ENCODE measurements at regions of chr2 and their contacts with region 1.

Region 1: DNA sequence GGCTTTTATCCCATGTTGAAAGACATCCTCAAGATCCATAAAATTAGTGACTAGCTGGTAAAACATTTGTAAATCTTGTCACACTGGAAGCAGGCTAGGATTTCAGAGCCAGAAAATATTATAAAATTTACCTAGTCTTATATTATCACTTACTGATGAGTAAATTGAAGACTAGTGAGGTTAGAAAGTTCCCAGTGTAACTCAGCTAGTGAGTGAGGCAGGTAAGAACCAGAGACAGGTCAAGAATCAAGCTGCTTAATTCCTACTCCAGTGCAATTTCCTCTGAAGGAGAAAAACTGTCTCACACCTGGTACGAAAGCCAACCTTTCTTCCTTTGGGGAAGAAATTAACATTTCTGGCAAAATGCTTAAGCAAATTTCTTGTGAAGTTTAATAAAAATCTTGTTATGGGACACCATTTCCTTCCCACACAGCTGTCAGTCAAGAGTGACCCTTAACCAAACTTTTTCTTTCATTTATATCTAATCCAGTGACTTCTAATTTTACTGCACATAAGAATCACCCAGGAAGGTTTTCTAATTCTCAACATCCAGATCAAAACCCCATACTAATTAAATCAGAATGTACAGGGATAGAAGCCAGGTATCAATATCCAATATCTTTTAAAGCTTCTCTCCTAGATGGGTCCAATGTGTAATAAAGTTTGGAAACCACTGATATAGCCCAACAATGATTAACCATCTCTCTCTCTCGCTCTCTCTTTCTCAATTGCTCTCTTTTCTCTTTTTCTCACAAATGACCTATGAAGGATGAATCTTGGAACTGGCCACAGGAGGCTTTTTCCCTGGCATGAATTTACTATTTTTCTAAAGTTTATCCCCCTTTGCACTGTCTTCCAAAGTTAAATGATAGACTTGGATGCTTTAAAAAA is 264.3 kb upstream of the SLC39A10 start:
- DNase-seq: no peak
- ATAC-seq: no peak
- H3K4me3 ChIP-seq: no peak overlapping the region
- H3K4me1 ChIP-seq: no peaks in the 10 kb centered on the region
- CTCF ChIP-seq: no peak

Region 2: GRCh38 chr2:195212586-195212985 is 180.1 kb before region 1 on chr2:
- intact Hi-C with region 1: loop called in 1 of 2 experiments (anchors 5 kb)
- DNase-seq: no peak
- ATAC-seq: no peak
- H3K4me3 ChIP-seq: no peak overlapping the region
- H3K4me1 ChIP-seq: no peaks in the 10 kb centered on the region
- CTCF ChIP-seq: no peak

Region 3: DNA sequence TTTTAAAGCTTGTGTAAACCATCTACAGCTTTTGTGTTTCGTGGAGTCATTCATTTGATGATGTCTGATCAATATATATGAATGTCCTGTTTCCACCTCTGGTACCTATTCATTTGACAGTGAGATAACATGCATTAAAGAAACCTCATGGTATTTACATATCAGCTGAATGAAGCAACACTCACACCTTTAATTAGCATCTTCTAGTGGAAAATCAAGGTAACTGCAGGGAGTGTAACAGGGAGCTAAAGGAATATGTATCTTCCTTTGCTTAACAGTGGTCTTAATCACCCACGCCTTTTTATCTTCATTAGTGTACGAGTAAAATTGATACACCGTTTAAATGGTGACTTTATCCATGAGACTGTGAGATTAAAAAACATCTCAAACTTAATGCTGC is 280.0 kb after region 1 on chr2:
- intact Hi-C with region 1: no loop called
- DNase-seq: no peak
- ATAC-seq: peak; percentile 25
- H3K4me3 ChIP-seq: no peak overlapping the region
- H3K4me1 ChIP-seq: peaks cover 4% of the 10 kb centered on the region
- CTCF ChIP-seq: no peak